WTC11 (cell line): ENCODE measurements at regions of chr3 and their contacts with region 1.

Region 1: DNA sequence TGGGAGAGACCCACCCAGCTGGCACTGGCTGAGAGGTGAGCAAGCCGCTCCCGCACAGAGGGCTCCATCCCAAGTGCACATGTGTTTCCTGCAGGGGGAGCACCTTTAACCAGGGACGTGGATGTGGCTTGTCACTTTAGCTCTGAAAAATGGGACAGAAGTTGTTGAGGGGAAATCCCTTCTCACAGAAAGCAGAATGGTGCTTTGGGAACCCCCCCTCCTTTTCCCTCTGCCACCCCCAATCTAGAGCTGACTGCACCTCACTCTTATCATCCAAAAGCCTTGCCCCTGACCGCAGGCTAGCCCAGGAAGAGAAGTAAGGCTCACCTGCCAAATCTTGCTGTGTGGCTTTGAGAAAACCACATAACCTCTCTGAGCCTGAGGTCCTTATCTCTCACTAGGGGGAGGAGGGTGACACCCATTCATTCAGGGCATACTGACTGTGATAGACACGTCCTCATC is 77.9 kb downstream of the RPN1 start:
- DNase-seq: peak; percentile 59
- ATAC-seq: peak; percentile 69
- H3K4me3 Mint-ChIP-seq: no peak overlapping the region
- H3K27ac Mint-ChIP-seq: no peak overlapping the region
- H3K4me1 Mint-ChIP-seq: peaks cover 19% of the 10 kb centered on the region
- H3K27me3 Mint-ChIP-seq: no peaks in the 10 kb centered on the region; the same call in none of the 2 replicates
- CTCF ChIP-seq: peak; percentile 20; the same call in 1 of the 2 replicates

Region 2: DNA sequence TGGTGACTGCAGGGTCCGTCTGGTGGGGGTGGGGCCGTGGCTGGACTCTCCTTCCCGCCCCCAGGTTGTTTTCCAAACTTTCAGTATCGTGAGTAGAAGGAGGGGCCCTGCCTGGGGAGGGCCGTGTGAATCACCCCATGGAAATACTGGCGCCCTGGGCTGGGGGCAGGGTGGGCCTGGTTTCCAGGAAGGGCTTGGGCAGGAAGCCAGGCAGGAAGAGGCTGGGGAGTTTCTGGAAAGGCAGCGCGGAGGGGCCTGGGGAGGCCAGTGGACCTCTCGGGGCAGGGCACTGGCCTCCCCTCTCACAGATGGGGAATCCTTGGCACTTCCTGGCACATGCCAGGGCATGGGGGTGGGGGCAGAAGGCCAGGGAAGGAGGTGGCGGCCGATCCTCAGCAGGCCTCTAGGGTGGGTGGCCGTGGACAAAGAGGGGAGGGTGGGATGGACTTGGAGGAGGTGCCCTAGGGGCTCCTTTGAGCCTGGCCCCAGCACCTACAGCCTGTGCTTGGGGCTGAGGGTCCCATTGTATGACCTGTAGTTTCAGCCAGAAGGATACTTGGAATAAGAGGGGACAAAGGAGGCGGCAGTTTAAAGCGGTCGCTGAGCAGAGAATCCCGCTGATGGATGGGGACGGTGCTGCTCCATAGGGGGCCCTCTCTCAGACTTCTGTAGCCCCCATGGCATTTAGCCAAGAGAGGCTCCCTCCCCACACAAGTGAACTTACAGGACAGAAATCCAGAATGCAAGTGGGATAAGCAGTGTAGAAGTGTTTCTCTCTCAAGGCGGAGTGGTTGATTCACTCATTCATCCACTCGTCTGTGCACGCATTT is 23.2 kb before region 1 on chr3:
- CTCF ChIA-PET with region 1: interaction called, 15 read pairs
- POLR2A ChIA-PET with region 1: no interaction called
- DNase-seq: no peak
- ATAC-seq: peak; percentile 41
- H3K4me3 Mint-ChIP-seq: no peak overlapping the region
- H3K27ac Mint-ChIP-seq: 0 out of 2 replicates have a peak overlapping the region, but pooled peaks have one; percentile 53
- H3K4me1 Mint-ChIP-seq: peaks cover 16% of the 10 kb centered on the region
- H3K27me3 Mint-ChIP-seq: peaks cover 21% of the 10 kb centered on the region
- CTCF ChIP-seq: no peak

Region 3: GRCh38 chr3:128584412-128585020 is 11.8 kb after region 1 on chr3:
- CTCF ChIA-PET with region 1: interaction called, 18 read pairs
- POLR2A ChIA-PET with region 1: no interaction called
- DNase-seq: peak; percentile 82
- ATAC-seq: peak; percentile 99
- H3K4me3 Mint-ChIP-seq: no peak overlapping the region
- H3K27ac Mint-ChIP-seq: no peak overlapping the region
- H3K4me1 Mint-ChIP-seq: peaks cover 14% of the 10 kb centered on the region
- H3K27me3 Mint-ChIP-seq: peaks cover 8% of the 10 kb centered on the region
- CTCF ChIP-seq: 0 out of 2 replicates have a peak, but pooled peaks have one; percentile 42

Region 4: GRCh38 chr3:128590948-128591347 is 18.3 kb after region 1 on chr3:
- CTCF ChIA-PET with region 1: interaction called, 15 read pairs
- POLR2A ChIA-PET with region 1: interaction called, 3 read pairs
- DNase-seq: peak; percentile 76
- ATAC-seq: peak; percentile 97
- H3K4me3 Mint-ChIP-seq: no peak overlapping the region
- H3K27ac Mint-ChIP-seq: no peak overlapping the region
- H3K4me1 Mint-ChIP-seq: peaks cover 4% of the 10 kb centered on the region
- H3K27me3 Mint-ChIP-seq: no peaks in the 10 kb centered on the region
- CTCF ChIP-seq: peak; percentile 7; the same call in 1 of the 2 replicates

Region 5: DNA sequence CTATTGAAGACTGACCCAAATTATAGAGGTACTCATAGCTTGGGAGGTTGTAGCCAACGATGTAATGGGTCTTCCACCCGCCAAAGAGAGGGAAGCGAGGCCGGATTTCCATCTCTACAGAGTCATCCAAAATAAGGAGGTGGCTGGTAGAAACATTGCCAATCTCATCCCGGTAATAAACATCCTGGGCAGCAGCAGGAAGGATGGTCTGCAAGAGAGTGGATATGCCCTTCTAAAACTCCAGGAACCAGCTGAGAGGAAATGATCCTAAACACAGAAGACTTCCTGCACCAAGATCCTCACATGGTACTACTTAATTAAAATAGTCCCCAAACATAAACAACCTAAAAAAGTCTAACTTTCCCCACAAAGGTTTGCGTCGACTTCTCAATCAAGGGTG is 57.3 kb after region 1 on chr3:
- CTCF ChIA-PET with region 1: no interaction called
- POLR2A ChIA-PET with region 1: no interaction called
- DNase-seq: no peak
- ATAC-seq: no peak
- H3K4me3 Mint-ChIP-seq: no peak overlapping the region
- H3K27ac Mint-ChIP-seq: no peak overlapping the region
- H3K4me1 Mint-ChIP-seq: no peaks in the 10 kb centered on the region
- H3K27me3 Mint-ChIP-seq: no peaks in the 10 kb centered on the region
- CTCF ChIP-seq: no peak